ENCODE measurements at regions of chr6 and their contacts with region 1.

Region 1: DNA sequence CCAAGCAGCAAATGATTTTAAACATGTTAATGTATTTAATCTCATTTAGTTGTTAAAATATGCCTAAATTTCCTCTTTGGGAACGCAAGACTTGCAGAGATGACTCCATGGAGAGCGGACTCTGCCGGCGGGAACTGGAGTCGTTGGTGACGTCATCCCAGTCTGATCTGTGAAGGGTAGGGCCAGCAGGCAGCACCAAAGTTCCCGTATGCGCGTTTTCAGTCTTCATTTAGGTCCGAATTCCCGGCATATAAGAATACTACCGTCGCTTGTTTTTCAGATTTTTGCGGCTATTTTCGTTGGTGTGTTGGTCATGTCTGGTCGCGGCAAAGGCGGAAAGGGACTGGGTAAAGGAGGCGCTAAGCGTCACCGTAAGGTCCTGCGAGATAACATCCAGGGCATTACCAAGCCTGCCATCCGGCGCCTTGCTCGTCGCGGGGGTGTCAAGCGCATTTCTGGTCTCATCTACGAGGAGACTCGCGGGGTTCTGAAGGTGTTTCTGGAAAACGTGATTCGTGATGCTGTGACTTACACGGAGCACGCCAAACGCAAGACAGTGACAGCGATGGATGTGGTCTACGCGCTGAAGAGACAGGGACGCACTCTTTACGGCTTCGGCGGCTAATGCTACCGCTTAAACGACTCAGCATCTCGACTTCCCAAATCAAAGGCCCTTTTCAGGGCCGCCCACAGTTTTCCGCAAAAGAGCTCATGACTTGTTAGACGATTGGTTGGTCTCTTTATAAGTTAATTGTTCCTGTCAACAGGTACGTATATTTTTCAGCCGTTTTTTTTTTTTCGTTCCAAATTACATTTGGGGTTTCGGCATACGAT is 117.3 kb downstream of the HFE start:
- DNase-seq: peak; percentile 91
- ATAC-seq: peak; percentile 92

Region 2: DNA sequence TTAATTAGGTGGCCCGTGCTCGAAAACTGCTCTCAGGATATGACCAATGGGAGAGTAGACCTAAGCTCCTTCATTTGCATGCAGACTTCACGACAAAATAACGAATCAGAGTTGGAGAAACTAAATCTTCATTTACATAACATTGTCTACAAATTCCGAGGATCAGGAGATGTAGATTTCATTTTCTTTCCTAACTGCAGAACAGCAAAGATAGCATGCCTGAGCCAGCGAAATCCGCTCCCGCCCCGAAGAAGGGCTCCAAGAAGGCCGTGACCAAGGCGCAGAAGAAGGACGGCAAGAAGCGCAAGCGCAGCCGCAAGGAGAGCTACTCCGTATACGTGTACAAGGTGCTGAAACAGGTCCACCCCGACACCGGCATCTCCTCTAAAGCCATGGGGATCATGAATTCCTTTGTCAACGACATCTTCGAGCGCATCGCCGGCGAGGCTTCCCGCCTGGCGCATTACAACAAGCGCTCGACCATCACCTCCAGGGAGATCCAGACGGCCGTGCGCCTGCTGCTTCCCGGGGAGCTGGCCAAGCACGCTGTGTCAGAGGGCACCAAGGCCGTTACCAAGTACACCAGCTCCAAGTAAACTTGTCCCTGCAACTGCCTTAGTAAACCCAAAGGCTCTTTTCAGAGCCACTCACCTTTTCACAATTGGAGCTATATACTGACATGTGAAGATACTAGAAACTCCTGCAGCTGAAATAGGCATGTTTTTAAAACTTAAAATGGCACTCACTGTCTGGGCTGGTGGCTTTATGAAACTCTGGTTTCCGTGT is 20.8 kb before region 1 on chr6:
- intact Hi-C with region 1: no loop called
- DNase-seq: peak; percentile 77
- ATAC-seq: peak; percentile 93

Region 3: DNA sequence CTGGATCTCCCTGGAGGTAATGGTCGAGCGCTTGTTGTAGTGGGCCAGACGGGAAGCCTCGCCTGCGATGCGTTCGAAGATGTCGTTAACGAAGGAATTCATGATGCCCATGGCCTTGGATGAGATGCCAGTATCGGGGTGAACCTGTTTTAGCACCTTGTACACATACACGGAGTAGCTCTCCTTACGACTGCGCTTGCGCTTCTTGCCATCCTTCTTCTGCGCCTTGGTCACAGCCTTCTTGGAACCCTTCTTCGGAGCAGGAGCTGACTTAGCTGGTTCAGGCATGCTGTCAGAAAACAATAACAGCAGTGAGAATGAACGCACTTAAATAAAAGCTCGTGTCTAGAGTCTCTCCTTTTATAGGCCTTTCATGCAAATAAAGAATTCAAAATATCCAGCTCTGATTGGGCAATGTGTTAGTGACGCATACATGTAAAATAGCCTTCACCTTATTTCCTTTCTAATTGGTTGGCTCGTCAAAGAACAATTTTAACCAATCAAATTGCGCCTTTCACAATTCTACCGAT is 11.9 kb after region 1 on chr6:
- intact Hi-C with region 1: loop called (anchors 1 kb)
- DNase-seq: no peak
- ATAC-seq: peak; percentile 86

Region 4: GRCh38 chr6:26270903-26271667 is 66.5 kb after region 1 on chr6:
- intact Hi-C with region 1: loop called (anchors 5 kb)
- DNase-seq: no peak
- ATAC-seq: peak; percentile 40